Gastrocnemius medialis (tissue), 4 donors: ENCODE measurements at regions of chr20 and their contacts with region 1.

Region 1: GRCh38 chr20:11544029-11544678 is 373.5 kb upstream of the BTBD3 start:
- DNase-seq: peak in 1 of 2 donors; percentile 5
- ATAC-seq: peak in 1 of 2 donors; percentile 63
- H3K4me3 ChIP-seq: no peak overlapping the region
- H3K27ac ChIP-seq: no peak overlapping the region
- H3K4me1 ChIP-seq: no peaks in the 10 kb centered on the region
- H3K27me3 ChIP-seq: no peaks in the 10 kb centered on the region
- CTCF ChIP-seq: peak; percentile 37 to 66 (median 54)
- POLR2A ChIP-seq: no peak

Region 2: GRCh38 chr20:9978397-9979004 is 1565.7 kb before region 1 on chr20:
- in situ Hi-C with region 1: loop called in 2 of 4 experiments (anchors 25 kb)
- intact Hi-C with region 1: loop called (anchors 5 kb)
- DNase-seq: peak; percentile 6 to 14
- ATAC-seq: peak; percentile 83 to 85
- H3K4me3 ChIP-seq: no peak overlapping the region
- H3K27ac ChIP-seq: no peak overlapping the region
- H3K4me1 ChIP-seq: no peaks in the 10 kb centered on the region
- H3K27me3 ChIP-seq: no peaks in the 10 kb centered on the region
- CTCF ChIP-seq: peak; percentile 29 to 62 (median 56)
- POLR2A ChIP-seq: no peak

Region 3: GRCh38 chr20:10476319-10476724 is 1067.8 kb before region 1 on chr20:
- in situ Hi-C with region 1: loop called in 1 of 4 experiments (anchors 25 kb)
- intact Hi-C with region 1: loop called (anchors 5 kb)
- DNase-seq: no peak
- ATAC-seq: peak in 1 of 2 donors; percentile 30
- H3K4me3 ChIP-seq: no peak overlapping the region
- H3K27ac ChIP-seq: no peak overlapping the region
- H3K4me1 ChIP-seq: peaks cover 5 to 15% of the 10 kb centered on the region in 2 donors
- H3K27me3 ChIP-seq: no peaks in the 10 kb centered on the region
- CTCF ChIP-seq: no peak
- POLR2A ChIP-seq: no peak

Region 4: GRCh38 chr20:10673988-10674711 is 870.0 kb before region 1 on chr20 and contains the start of gene JAG1:
- in situ Hi-C with region 1: loop called in 1 of 4 experiments (anchors 25 kb)
- intact Hi-C with region 1: loop called (anchors 10 kb)
- DNase-seq: peak; percentile 91 to 93
- ATAC-seq: peak; percentile 79 to 80
- H3K4me3 ChIP-seq: peak within 1 kb of the TSS; percentile 62 to 98 (median 82)
- H3K27ac ChIP-seq: peak within 1 kb of the TSS; percentile 86 to 95 (median 88)
- H3K4me1 ChIP-seq: peaks cover 0 to 18% of the 10 kb centered on the region in 2 donors
- H3K27me3 ChIP-seq: no peaks in the 10 kb centered on the region
- CTCF ChIP-seq: no peak
- POLR2A ChIP-seq: peak in 1 of 2 donors; percentile 89
- total RNA-seq, gene JAG1: 10.3 to 19.6 (median 13.2) TPM

Region 5: DNA sequence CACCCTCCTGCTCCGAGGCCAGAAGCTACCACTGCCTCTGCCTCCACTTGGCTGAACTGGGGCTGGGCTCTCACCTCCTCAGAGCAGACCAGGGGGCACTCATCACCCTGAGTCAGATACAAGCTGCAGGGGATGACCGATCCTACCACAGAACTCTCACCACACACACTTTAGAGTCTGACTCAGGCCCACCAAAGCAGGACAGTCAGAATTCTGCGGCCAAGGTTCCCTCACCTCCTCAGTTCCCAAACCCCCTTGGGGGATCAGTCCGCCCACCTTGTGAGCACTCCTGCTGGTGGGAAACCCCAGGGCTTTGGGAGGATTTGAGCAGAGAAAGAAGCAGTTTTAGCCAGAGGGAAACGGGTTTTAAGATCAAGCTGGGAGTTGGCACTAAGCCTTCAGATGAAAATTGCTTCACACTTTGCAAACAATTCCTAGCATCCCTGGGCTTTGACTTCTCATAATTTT is 282.6 kb before region 1 on chr20:
- in situ Hi-C with region 1: no loop called
- intact Hi-C with region 1: no loop called
- DNase-seq: no peak
- ATAC-seq: no peak
- H3K4me3 ChIP-seq: no peak overlapping the region
- H3K27ac ChIP-seq: no peak overlapping the region
- H3K4me1 ChIP-seq: no peaks in the 10 kb centered on the region
- H3K27me3 ChIP-seq: no peaks in the 10 kb centered on the region
- CTCF ChIP-seq: no peak
- POLR2A ChIP-seq: no peak

Region 6: GRCh38 chr20:11626551-11626950 is 82.4 kb after region 1 on chr20:
- in situ Hi-C with region 1: no loop called
- intact Hi-C with region 1: no loop called
- DNase-seq: no peak
- ATAC-seq: no peak
- H3K4me3 ChIP-seq: no peak overlapping the region
- H3K27ac ChIP-seq: no peak overlapping the region
- H3K4me1 ChIP-seq: no peaks in the 10 kb centered on the region
- H3K27me3 ChIP-seq: no peaks in the 10 kb centered on the region
- CTCF ChIP-seq: no peak
- POLR2A ChIP-seq: no peak

Region 7: DNA sequence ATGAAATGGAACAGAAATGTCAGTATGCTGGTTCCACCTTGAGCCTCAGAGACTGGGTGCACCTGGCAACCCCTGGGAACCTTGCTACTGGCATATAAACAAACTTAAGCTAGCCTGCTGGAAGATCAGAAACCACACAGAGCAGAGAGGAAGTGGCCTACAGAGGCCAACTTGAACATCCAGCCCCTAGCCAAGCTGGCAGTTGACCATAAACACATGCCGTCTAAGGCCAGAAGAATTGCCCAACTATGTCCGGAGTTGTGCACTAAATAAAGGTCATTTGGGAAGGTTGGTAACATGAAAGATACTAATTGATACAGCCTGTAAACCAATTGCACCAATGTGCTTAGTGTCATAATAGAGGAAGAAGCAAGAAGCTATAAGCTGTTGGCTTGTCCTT is 107.0 kb after region 1 on chr20:
- in situ Hi-C with region 1: no loop called
- intact Hi-C with region 1: no loop called
- DNase-seq: no peak
- ATAC-seq: no peak
- H3K4me3 ChIP-seq: no peak overlapping the region
- H3K27ac ChIP-seq: no peak overlapping the region
- H3K4me1 ChIP-seq: no peaks in the 10 kb centered on the region
- H3K27me3 ChIP-seq: no peaks in the 10 kb centered on the region
- CTCF ChIP-seq: no peak
- POLR2A ChIP-seq: no peak